ENCODE measurements at regions of chr11 and their contacts with region 1.

Region 1: GRCh38 chr11:64854534-64855429 is 10.3 kb upstream of the CDC42BPG start:
- DNase-seq: peak; percentile 80
- ATAC-seq: peak; percentile 65
- H3K4me3 ChIP-seq: no peak overlapping the region
- H3K27ac ChIP-seq: peak overlapping the region; percentile 43
- H3K4me1 ChIP-seq: peaks cover 38% of the 10 kb centered on the region
- H3K27me3 ChIP-seq: no peaks in the 10 kb centered on the region
- CTCF ChIP-seq: no peak
- EP300 ChIP-seq: peak in 1 of 2 experiments; percentile 62; a peak in 2 of 4 replicates
- POLR2A ChIP-seq: no peak
- RAD21 ChIP-seq: no peak

Region 2: DNA sequence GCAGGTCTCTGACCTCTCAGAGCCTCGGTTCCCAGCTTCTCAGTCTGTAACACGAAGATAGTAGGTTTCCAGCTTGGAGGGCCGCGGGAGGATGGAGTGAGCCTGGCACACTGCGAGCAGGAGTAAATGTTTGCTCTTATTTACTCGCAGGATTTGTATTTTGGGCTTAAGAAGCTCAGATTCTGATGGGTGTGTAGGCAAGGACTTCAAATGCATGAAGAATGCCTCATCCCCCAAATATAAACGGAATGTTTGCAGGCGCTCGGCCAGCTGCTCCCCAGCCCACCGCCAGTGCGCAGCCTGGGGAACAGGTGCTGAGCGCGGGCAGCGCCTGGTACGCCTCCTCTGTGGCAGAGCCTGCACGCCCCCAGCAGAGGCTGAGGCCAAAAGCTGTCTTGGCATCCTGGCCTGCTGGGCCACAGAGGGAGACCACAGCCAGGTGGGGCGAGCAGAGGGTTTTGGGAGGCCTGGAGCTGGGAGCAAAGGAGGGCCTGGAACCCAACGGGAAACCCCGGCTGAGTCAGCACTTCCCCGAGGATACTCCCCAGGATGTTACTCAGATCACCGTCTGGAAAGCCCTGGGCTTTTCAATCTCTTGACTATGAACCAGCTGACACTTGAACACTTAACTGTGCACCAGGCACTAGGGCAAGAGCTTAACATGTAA is 14.3 kb after region 1 on chr11:
- CTCF ChIA-PET with region 1: no interaction called
- POLR2A ChIA-PET with region 1: interaction called, 23 read pairs
- in situ Hi-C with region 1: no loop called
- intact Hi-C with region 1: loop called (anchors 1 kb)
- DNase-seq: no peak
- ATAC-seq: no peak
- H3K4me3 ChIP-seq: no peak overlapping the region
- H3K27ac ChIP-seq: no peak overlapping the region
- H3K4me1 ChIP-seq: peaks cover 57% of the 10 kb centered on the region
- H3K27me3 ChIP-seq: no peaks in the 10 kb centered on the region
- CTCF ChIP-seq: no peak
- EP300 ChIP-seq: no peak
- POLR2A ChIP-seq: no peak
- RAD21 ChIP-seq: no peak

Region 3: GRCh38 chr11:64878494-64879243 is 23.9 kb after region 1 on chr11 and contains the start of gene EHD1:
- CTCF ChIA-PET with region 1: no interaction called
- POLR2A ChIA-PET with region 1: interaction called, 23 read pairs
- in situ Hi-C with region 1: no loop called
- intact Hi-C with region 1: no loop called
- DNase-seq: peak; percentile 91
- ATAC-seq: peak; percentile 78
- H3K4me3 ChIP-seq: peak within 1 kb of the TSS; percentile 83 to 99 (median 98)
- H3K27ac ChIP-seq: peak within 1 kb of the TSS; percentile 62
- H3K4me1 ChIP-seq: peaks cover 62% of the 10 kb centered on the region
- H3K27me3 ChIP-seq: no peaks in the 10 kb centered on the region; a peak in 1 of 5 replicates
- CTCF ChIP-seq: peak; percentile 89
- EP300 ChIP-seq: peak in 1 of 2 experiments; percentile 9; a peak in 1 of 4 replicates
- POLR2A ChIP-seq: peak in 1 of 2 experiments; percentile 99; a peak in 2 of 4 replicates
- RAD21 ChIP-seq: peak; percentile 77
- total RNA-seq, gene EHD1: 22.0 and 26.6 TPM in 2 replicates

Region 4: DNA sequence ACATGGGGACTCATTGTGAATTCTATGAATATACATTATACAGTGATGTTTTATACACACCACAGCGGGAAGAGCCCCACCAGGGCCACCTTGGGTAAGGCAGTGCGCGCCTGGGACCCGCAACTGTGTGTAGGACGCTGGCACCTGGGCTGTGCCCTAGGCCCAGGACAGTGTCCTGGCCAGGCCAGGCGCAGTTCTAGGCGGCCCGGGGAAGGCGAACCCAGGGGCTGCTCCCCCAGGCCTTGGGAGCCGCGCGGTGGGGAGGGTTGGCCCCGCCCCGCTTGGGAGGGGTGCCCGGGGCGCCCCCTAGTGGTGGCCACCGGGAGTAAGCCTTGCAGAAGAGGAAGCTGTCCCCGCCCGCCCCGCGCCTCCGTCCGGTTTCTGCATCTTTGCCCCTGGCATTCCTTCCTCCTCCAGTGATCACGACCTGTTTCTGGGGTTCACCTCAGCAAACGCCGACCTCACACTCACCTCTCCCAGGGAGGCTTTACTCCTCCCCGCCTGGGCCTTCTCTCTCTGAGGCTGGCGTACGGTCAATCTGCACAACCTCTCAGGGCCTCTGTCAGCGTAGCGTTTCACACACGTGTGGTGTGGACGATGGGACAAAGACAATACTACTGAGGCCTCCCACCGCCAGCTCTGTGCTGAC is 33.1 kb after region 1 on chr11:
- CTCF ChIA-PET with region 1: no interaction called
- POLR2A ChIA-PET with region 1: interaction called, 26 read pairs
- in situ Hi-C with region 1: loop called (anchors 5 kb)
- intact Hi-C with region 1: no loop called
- DNase-seq: peak; percentile 46
- ATAC-seq: peak; percentile 63
- H3K4me3 ChIP-seq: peak overlapping the region; percentile 19 to 76 (median 42)
- H3K27ac ChIP-seq: peak overlapping the region; percentile 67
- H3K4me1 ChIP-seq: peaks cover 90% of the 10 kb centered on the region
- H3K27me3 ChIP-seq: no peaks in the 10 kb centered on the region; a peak in 1 of 5 replicates
- CTCF ChIP-seq: peak; percentile 94
- EP300 ChIP-seq: 0 out of 4 replicates have a peak, but pooled peaks of 1 of the 2 experiments have one; percentile 2
- POLR2A ChIP-seq: no peak; a peak in 1 of 4 replicates
- RAD21 ChIP-seq: peak; percentile 66

Region 5: GRCh38 chr11:64894070-64894796 is 39.5 kb after region 1 on chr11:
- CTCF ChIA-PET with region 1: no interaction called
- POLR2A ChIA-PET with region 1: interaction called, 26 read pairs
- in situ Hi-C with region 1: loop called (anchors 5 kb)
- intact Hi-C with region 1: no loop called
- DNase-seq: peak; percentile 76
- ATAC-seq: peak; percentile 76
- H3K4me3 ChIP-seq: peak overlapping the region; percentile 80 to 96 (median 95); a peak in 5 of 6 replicates
- H3K27ac ChIP-seq: peak overlapping the region; percentile 88
- H3K4me1 ChIP-seq: peaks cover 47% of the 10 kb centered on the region
- H3K27me3 ChIP-seq: no peaks in the 10 kb centered on the region; a peak in 1 of 5 replicates
- CTCF ChIP-seq: peak; percentile 99
- EP300 ChIP-seq: peak in 1 of 2 experiments; percentile 55; a peak in 2 of 4 replicates
- POLR2A ChIP-seq: no peak
- RAD21 ChIP-seq: peak; percentile 94